Activated CD4-positive, alpha-beta T cell treated with anti-CD3 and anti-CD28 coated beads for 36 hours (primary cell): ENCODE measurements at regions of chr17 and their contacts with region 1.

Region 1: DNA sequence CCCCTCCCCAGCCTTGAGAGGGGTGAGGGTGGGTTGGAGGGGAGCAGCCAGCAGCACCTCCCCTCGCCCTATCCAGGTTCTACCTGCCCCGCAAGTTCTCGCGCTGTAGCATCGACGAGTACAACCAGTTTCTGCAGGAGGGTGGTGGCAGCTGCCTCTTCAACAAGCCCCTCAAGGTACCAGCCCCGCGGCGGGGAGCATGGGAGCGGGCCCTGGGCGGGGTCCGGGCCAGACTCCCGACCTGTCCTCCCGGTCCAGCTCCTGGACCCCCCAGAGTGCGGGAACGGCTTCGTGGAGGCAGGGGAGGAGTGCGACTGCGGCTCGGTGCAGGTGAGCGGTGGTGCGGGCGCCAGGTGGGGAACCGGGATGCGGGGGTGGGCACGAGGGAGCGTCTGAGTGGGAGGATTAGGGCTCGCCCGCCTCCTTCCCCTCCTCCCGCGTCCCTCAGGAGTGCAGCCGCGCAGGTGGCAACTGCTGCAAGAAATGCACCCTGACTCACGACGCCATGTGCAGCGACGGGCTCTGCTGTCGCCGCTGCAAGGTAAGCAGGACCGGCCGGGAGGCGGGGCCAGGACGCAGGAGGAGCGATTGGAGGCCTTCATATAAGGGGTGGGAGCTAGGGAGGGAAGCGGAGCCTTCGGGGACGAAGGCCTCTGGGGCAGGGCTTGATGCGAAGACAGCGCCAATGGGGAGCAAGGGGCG is 16.5 kb downstream of the ADAM11 start:
- DNase-seq: no peak
- ATAC-seq: peak; percentile 97
- H3K4me3 Mint-ChIP-seq: peak overlapping the region; percentile 77
- H3K27ac Mint-ChIP-seq: no peak overlapping the region
- H3K4me1 Mint-ChIP-seq: peaks cover 7% of the 10 kb centered on the region
- H3K27me3 Mint-ChIP-seq: no peaks in the 10 kb centered on the region

Region 2: DNA sequence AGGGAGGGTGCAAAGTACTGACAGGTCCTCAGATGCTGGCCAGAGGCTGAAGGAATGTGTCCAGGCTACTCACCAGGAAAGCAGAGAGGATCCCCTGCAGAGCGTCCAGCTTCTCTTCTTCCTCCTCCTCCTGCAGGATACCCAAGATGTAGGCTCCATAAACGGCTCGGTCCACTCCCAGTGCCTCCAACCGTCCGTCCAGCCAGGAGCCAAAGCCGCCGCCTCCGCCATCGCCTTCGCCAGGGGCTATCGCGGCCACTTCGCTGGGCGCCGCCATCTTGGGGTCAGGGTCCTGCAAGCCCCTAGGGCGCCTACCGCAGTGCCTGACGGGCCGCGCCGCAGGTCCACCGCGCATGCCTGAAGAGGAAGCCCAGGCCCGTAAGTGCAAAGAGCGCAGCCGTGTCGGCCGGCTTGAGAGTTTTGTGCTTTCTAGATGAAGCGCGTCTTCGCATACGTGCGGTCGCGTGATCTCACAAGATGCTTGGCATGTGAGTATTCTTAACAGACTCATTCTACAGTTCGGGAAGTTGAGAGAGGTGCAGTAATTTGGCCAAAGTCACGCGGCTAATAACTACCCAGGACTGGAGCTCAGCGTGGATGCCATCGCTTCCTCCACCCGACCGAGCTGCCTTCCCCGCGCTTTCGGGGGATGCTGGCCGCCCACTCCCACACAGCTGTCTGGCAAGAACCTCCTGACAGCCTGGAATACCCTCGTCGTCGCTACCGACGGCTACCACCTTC is 85.6 kb before region 1 on chr17 and contains the start of gene CCDC43:
- CTCF ChIA-PET with region 1: interaction called, 3 read pairs
- POLR2A ChIA-PET with region 1: no interaction called
- intact Hi-C with region 1: loop called in 1 of 2 experiments (anchors 1 kb)
- DNase-seq: peak; percentile 95
- ATAC-seq: peak; percentile 99
- H3K4me3 Mint-ChIP-seq: peak within 1 kb of the TSS; percentile 86
- H3K27ac Mint-ChIP-seq: peak within 1 kb of the TSS; percentile 93
- H3K4me1 Mint-ChIP-seq: peaks cover 26% of the 10 kb centered on the region
- H3K27me3 Mint-ChIP-seq: no peaks in the 10 kb centered on the region
- total RNA-seq, gene CCDC43: 31.8 to 33.7 TPM

Region 3: GRCh38 chr17:44829523-44830358 is 54.5 kb after region 1 on chr17 and contains the start of gene GJC1:
- CTCF ChIA-PET with region 1: interaction called, 7 read pairs
- POLR2A ChIA-PET with region 1: interaction called, 3 read pairs
- intact Hi-C with region 1: loop called (anchors 1 to 5 kb)
- DNase-seq: peak; percentile 50
- ATAC-seq: peak; percentile 64
- H3K4me3 Mint-ChIP-seq: peak within 1 kb of the TSS; percentile 76
- H3K27ac Mint-ChIP-seq: peak within 1 kb of the TSS; percentile 75
- H3K4me1 Mint-ChIP-seq: peaks cover 13% of the 10 kb centered on the region
- H3K27me3 Mint-ChIP-seq: peaks cover 36% of the 10 kb centered on the region
- total RNA-seq, gene GJC1: 3.3 to 3.7 TPM

Region 4: DNA sequence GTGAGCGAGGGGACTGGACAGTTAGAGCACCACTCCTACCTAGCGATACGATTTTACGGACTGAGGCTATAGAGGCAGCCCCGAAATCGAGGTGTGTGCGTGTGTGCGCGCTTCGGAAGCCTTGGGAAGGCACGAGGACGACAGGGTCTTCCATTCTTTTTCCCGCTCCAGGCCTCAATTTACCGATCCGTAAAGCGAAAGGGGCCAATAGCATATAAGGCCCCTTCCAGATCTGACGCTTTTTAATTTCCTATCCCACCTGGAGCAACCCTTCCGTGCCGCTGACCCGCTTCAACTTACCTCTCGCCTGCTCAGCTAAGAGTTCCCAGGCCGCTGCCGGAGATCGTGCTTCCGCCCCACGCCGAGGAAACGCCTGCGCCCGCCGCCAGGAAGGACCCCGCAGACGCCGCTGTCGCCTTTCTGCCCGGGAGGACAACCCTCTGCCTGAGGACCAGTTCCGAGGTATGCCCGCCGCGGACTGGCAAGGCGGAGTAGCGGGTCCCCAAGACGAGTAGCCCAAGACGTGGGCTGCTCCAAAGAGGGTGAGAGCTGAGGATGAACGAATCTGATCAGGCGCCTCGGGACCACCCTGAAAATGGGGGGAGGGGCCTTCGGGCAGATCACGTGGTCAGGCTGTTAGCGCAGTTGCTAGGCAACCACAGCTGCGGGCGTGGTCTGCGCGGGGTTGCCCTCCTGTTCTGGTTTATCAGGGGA is 123.9 kb after region 1 on chr17 and contains the start of gene EFTUD2:
- CTCF ChIA-PET with region 1: interaction called, 5 read pairs
- POLR2A ChIA-PET with region 1: no interaction called
- intact Hi-C with region 1: loop called (anchors 1 kb)
- DNase-seq: peak; percentile 95
- ATAC-seq: peak; percentile 94
- H3K4me3 Mint-ChIP-seq: peak within 1 kb of the TSS; percentile 98
- H3K27ac Mint-ChIP-seq: peak within 1 kb of the TSS; percentile 98
- H3K4me1 Mint-ChIP-seq: peaks cover 26% of the 10 kb centered on the region
- H3K27me3 Mint-ChIP-seq: no peaks in the 10 kb centered on the region
- total RNA-seq, gene EFTUD2: 175 to 203 TPM

Region 5: GRCh38 chr17:45038728-45039634 is 263.7 kb after region 1 on chr17:
- CTCF ChIA-PET with region 1: no interaction called
- POLR2A ChIA-PET with region 1: no interaction called
- intact Hi-C with region 1: no loop called
- DNase-seq: no peak
- ATAC-seq: no peak
- H3K4me3 Mint-ChIP-seq: no peak overlapping the region
- H3K27ac Mint-ChIP-seq: no peak overlapping the region
- H3K4me1 Mint-ChIP-seq: peaks cover 16% of the 10 kb centered on the region
- H3K27me3 Mint-ChIP-seq: no peaks in the 10 kb centered on the region

Region 6: DNA sequence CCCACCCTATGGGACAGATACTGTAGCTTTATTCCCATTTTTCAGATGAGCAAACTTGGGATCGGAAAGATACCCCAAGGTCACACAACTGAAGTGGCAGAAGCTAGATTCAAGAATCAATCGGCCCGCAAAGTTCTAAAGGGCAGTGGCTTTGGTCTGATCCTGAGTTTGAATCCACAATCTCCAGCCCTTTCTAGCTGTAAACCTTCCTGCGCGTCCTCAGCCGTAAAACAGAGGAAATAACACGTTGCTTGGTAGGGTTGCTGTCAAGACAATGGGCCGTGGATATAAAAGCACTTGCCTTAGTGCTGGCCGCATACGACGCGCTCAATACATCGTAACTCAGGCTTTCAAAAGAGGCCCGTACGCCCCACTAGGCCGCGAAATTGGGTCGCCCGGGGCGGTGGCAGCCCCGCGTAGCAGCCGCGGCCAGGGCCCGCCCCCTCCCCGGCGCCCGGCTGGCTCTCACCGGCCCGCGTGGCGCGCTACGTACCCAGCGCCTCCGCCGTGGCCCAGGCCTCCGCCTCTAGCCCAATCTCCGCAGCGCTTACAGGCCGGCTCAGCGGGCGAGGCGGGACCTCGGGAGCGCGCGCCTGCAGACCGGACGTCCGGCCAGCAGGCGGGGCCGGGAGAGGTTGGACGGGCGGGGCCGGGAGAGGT is 275.9 kb after region 1 on chr17 and contains the start of gene DCAKD:
- CTCF ChIA-PET with region 1: no interaction called
- POLR2A ChIA-PET with region 1: no interaction called
- intact Hi-C with region 1: loop called in 1 of 2 experiments (anchors 1 kb)
- DNase-seq: peak; percentile 96
- ATAC-seq: peak; percentile 97
- H3K4me3 Mint-ChIP-seq: peak within 1 kb of the TSS; percentile 87
- H3K27ac Mint-ChIP-seq: peak within 1 kb of the TSS; percentile 95
- H3K4me1 Mint-ChIP-seq: peaks cover 50% of the 10 kb centered on the region
- H3K27me3 Mint-ChIP-seq: no peaks in the 10 kb centered on the region
- total RNA-seq, gene DCAKD: 34.8 to 36.2 TPM

Region 7: DNA sequence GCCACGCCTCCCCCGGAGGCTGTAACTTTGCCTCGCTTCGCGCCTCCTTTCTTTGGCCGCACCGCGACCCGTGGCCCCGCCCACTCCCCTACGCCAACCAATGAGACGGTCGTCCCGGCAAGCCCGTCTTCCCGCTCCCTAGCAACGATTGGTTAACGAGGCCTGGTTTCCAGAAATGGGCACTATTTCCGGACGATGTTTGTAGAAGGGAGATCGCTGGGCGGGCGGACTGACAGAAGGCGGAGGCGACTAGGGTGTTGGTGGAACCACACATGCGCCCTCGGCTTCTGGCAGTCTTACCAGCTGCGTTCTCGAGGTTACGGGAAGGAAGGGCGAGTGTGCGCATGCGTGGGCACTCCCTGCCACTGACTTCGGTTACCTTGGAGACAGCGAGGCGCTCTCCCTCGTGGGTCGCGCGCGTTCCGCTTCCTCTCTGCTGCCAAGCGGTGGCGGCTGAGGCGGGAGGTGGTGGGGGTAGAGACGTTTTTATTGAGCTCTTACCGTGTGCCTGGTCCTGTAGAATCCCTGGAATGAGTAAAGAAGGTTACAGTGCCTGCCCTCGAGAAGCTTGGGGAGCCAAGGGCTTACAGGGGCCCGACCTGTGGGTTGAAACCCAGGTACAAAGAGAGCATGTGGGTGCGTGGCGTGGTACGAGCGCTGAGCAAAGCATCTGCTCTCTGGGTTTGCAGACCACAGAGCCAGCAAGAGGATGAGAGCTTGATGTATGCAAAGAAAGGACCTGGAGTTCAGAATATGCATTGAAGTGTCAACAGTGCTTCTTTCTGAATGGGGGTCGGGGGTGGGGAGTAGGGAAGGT is 542.0 kb after region 1 on chr17:
- CTCF ChIA-PET with region 1: no interaction called
- POLR2A ChIA-PET with region 1: no interaction called
- intact Hi-C with region 1: loop called in 1 of 2 experiments (anchors 1 kb)
- DNase-seq: peak; percentile 100
- ATAC-seq: peak; percentile 81
- H3K4me3 Mint-ChIP-seq: peak overlapping the region; percentile 91
- H3K27ac Mint-ChIP-seq: peak overlapping the region; percentile 89
- H3K4me1 Mint-ChIP-seq: peaks cover 65% of the 10 kb centered on the region
- H3K27me3 Mint-ChIP-seq: no peaks in the 10 kb centered on the region